Activated T-helper 2 cell treated with anti-CD3 and anti-CD28 coated beads, Interferon-gamma antibody, Interleukin-2, Interleukin-4, amounts not matched to agents 10 μg/mL and 5 μg/mL and 100 μg/mL, durations not matched to agents 14 hours and 24 hours and 36 hours (primary cell): ENCODE measurements at regions of chr12 and their contacts with region 1.

Region 1: GRCh38 chr12:69570545-69571399 is 14.5 kb upstream of the CCT2 start:
- DNase-seq: peak; percentile 23
- H3K4me3 Mint-ChIP-seq: no peak overlapping the region
- H3K27ac Mint-ChIP-seq: no peak overlapping the region
- H3K4me1 Mint-ChIP-seq: peaks cover 12% of the 10 kb centered on the region
- H3K27me3 Mint-ChIP-seq: no peaks in the 10 kb centered on the region

Region 2: DNA sequence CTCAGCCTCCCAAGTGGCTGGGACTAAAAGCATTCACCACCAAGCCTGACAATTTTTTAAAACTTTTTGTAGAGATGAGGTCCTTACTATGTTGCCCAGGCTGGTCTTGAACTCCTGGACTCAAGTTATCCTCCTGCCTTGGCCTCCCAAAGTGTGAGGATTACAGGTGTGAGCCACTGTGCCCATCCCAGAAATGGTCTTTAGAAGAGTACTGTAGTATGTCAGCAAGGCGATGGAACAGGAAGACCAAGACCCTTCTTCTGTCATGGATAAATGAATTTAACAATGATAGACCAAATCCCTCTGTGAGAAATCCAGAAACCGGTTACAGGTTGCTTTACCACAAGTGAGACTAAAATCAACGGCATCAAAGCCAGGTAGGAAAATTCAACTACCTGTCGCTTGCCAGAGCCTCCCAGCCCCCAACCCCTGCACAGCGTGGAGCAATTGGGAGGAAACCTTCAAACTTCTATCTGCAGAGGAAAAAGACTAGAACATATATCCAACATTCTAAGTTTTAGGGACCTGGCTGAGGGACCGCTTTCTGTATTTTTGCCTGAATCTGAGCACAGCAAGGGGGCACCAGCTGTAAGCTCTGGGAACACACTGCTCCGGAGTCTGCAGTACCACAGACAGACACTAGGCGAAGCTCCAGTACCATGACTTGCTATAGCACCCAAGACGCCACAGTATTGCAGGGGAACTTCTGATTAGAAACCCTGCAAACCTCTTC is 280.1 kb before region 1 on chr12:
- intact Hi-C with region 1: loop called (anchors 5 kb)
- DNase-seq: peak; percentile 67
- H3K4me3 Mint-ChIP-seq: no peak overlapping the region
- H3K27ac Mint-ChIP-seq: no peak overlapping the region
- H3K4me1 Mint-ChIP-seq: peaks cover 8% of the 10 kb centered on the region
- H3K27me3 Mint-ChIP-seq: peaks cover 53% of the 10 kb centered on the region

Region 3: DNA sequence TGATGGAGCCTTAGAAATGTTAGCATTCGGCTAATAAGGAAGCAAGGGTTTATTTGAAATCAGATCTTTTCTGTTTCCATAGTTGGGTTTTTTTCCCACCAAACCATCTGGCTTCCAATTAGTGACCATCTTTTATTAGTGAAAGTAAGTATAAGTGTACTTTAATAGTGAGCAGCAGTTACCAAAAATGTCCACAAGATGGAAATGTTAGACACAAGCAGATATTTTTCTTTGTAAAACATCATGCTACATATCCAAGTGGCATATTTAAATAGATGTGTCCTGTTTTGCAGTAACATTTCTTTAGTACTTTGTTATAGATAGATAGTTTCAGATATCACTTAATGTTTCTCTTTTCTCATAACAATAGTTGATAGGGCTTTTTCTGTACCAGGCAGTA is 182.4 kb before region 1 on chr12:
- intact Hi-C with region 1: loop called (anchors 2 kb)
- DNase-seq: no peak
- H3K4me3 Mint-ChIP-seq: no peak overlapping the region
- H3K27ac Mint-ChIP-seq: no peak overlapping the region
- H3K4me1 Mint-ChIP-seq: peaks cover 22% of the 10 kb centered on the region
- H3K27me3 Mint-ChIP-seq: no peaks in the 10 kb centered on the region

Region 4: GRCh38 chr12:69415471-69416275 is 155.1 kb before region 1 on chr12:
- intact Hi-C with region 1: loop called (anchors 2 kb)
- DNase-seq: no peak
- H3K4me3 Mint-ChIP-seq: no peak overlapping the region
- H3K27ac Mint-ChIP-seq: no peak overlapping the region
- H3K4me1 Mint-ChIP-seq: no peaks in the 10 kb centered on the region
- H3K27me3 Mint-ChIP-seq: no peaks in the 10 kb centered on the region

Region 5: DNA sequence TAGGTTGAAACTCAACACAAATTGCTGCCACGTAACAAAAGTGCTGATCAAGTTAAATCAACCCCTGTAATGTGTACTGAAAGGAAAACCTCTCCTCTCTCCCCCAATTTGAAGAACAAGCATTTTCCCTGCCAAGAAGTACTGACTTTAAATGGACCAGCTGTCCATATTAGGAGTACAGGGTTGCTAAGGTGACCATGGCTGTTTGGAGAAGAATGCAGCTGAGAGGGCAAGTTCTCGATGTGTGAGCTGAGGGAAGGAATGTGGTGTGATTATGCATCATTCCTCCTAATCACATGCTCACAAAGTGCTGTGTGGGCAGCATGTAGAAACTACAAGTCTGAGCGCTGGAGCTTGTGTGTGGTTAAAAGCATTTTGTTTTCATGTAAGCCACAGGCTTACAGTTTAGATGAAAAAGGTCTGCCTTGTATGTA is 36.4 kb before region 1 on chr12:
- intact Hi-C with region 1: loop called (anchors 5 kb)
- DNase-seq: peak; percentile 24
- H3K4me3 Mint-ChIP-seq: no peak overlapping the region
- H3K27ac Mint-ChIP-seq: peak overlapping the region; percentile 73
- H3K4me1 Mint-ChIP-seq: peaks cover 22% of the 10 kb centered on the region
- H3K27me3 Mint-ChIP-seq: no peaks in the 10 kb centered on the region

Region 6: DNA sequence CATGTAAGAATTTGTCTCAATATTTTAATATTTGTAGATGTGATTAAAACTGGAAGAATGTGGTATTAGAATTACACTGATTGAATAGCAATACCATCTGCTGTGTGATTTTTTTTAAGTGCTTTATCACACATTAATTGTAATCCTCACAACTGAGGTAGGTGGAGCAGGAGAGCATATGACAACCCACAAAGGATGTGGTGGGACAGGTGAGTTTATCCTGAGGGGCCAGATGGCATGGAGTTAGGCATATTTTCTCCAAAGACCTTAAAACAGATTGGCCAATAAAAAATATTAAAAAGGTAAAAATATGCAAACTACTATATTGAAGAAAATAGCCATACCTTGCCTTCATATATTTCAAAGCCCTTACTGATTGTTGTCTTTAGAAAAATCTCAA is 32.2 kb after region 1 on chr12:
- intact Hi-C with region 1: no loop called
- DNase-seq: no peak
- H3K4me3 Mint-ChIP-seq: no peak overlapping the region
- H3K27ac Mint-ChIP-seq: no peak overlapping the region
- H3K4me1 Mint-ChIP-seq: no peaks in the 10 kb centered on the region
- H3K27me3 Mint-ChIP-seq: peaks cover 2% of the 10 kb centered on the region

Region 7: GRCh38 chr12:69676257-69677012 is 105.7 kb after region 1 on chr12:
- intact Hi-C with region 1: no loop called
- DNase-seq: no peak
- H3K4me3 Mint-ChIP-seq: no peak overlapping the region
- H3K27ac Mint-ChIP-seq: no peak overlapping the region
- H3K4me1 Mint-ChIP-seq: no peaks in the 10 kb centered on the region
- H3K27me3 Mint-ChIP-seq: peaks cover 6% of the 10 kb centered on the region